Left lung (tissue), 14 donors: ENCODE measurements at regions of chr16 and their contacts with region 1.

Region 1: GRCh38 chr16:15581127-15581815 is 61.7 kb downstream of the MARF1 start:
- DNase-seq: no peak
- ATAC-seq: no peak
- H3K4me3 ChIP-seq: no peak overlapping the region
- H3K27ac ChIP-seq: peak overlapping the region in 1 of 2 donors; percentile 34
- H3K4me1 ChIP-seq: peaks cover 0 to 13% of the 10 kb centered on the region in 2 donors
- H3K27me3 ChIP-seq: no peaks in the 10 kb centered on the region
- CTCF ChIP-seq: no peak

Region 2: GRCh38 chr16:15539197-15539596 is 42.1 kb before region 1 on chr16:
- intact Hi-C with region 1: loop called in 1 of 2 experiments (anchors 10 kb)
- DNase-seq: no peak
- ATAC-seq: no peak
- H3K4me3 ChIP-seq: no peak overlapping the region
- H3K27ac ChIP-seq: no peak overlapping the region
- H3K4me1 ChIP-seq: no peaks in the 10 kb centered on the region
- H3K27me3 ChIP-seq: no peaks in the 10 kb centered on the region
- CTCF ChIP-seq: no peak